GM12878 (cell line): ENCODE measurements at regions of chr4 and their contacts with region 1.

Region 1: GRCh38 chr4:26179316-26179760 is 141.5 kb upstream of the RBPJ start:
- DNase-seq: peak; percentile 52
- ATAC-seq: peak; percentile 81
- H3K4me3 ChIP-seq: no peak overlapping the region
- H3K27ac ChIP-seq: no peak overlapping the region
- H3K4me1 ChIP-seq: peaks cover 19% of the 10 kb centered on the region
- H3K27me3 ChIP-seq: no peaks in the 10 kb centered on the region
- CTCF ChIP-seq: peak in 2 of 3 experiments; percentile 22 to 23; a peak in 2 of 6 replicates
- EP300 ChIP-seq: peak; percentile 70 to 77; a peak in 2 of 4 replicates
- POLR2A ChIP-seq: no peak
- RAD21 ChIP-seq: peak; percentile 62

Region 2: DNA sequence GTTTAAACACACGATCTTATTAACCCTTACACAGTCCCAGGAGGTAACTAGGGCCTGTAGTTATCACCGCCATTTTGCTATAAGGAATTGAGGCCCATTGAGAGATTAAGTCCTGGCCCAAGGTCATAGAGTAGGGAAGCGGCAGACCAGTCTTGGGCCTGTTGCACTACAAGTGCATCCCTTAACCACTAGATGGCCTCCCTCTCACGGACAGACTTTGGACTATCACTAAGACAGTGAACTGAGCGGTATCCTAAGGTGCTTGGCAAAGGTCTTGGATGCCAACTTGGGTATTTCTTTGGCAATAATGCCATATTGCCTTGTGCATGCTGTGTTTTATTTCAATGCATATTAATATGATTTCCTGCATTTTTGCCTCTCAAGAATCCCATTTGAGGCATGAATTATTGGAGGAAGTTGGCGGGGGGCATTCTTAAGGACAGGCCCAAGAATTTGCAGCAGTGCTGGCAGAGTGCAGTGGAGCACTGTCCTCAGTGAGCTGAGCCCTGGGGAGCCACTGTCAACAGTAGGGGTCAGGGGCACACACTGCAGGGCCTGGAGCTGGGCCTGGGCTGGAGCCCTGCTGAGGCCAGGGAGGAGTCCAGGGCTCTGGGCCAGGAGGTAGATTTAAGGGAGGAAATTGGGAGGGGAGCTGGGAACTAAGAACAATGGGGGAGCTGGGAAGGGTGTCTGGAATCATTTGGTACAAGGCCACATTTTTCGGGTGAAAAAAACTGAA is 117.9 kb before region 1 on chr4:
- CTCF ChIA-PET with region 1: interaction called, 4 read pairs
- POLR2A ChIA-PET with region 1: interaction called, 5 read pairs
- RAD21 ChIA-PET with region 1: no interaction called
- SMC1A ChIA-PET with region 1: no interaction called
- in situ Hi-C with region 1: no loop called
- intact Hi-C with region 1: loop called (anchors 5 kb)
- DNase-seq: no peak
- ATAC-seq: peak; percentile 96
- H3K4me3 ChIP-seq: no peak overlapping the region
- H3K27ac ChIP-seq: no peak overlapping the region
- H3K4me1 ChIP-seq: peaks cover 9% of the 10 kb centered on the region; the same call in 1 of the 2 replicates
- H3K27me3 ChIP-seq: no peaks in the 10 kb centered on the region; a peak in 3 of 4 replicates
- CTCF ChIP-seq: peak; percentile 64 to 76 (median 76); a peak in 5 of 6 replicates
- EP300 ChIP-seq: no peak
- POLR2A ChIP-seq: no peak
- RAD21 ChIP-seq: peak; percentile 94

Region 3: DNA sequence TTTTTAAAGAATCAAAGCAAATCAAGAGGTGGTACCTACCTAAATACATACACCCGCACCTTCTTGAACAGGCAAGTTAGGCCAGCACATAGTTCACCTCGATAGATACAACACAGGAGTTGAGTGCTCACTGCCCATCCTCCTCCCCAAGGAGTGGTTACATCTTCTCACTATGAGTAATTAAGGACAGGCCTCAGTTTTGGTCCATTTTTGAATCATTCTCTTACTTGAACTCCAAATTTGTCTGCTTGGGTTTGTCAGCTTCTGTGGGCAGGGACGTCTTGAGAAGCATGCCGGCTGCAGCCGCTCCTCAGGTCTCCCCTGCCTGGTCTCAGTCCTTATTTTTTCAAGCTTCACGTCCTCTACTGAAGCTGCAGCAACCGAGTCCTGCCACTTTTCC is 49.2 kb before region 1 on chr4:
- CTCF ChIA-PET with region 1: interaction called, 4 read pairs
- POLR2A ChIA-PET with region 1: interaction called, 3 read pairs
- RAD21 ChIA-PET with region 1: interaction called, 3 read pairs
- SMC1A ChIA-PET with region 1: interaction called, 4 read pairs
- in situ Hi-C with region 1: no loop called
- intact Hi-C with region 1: loop called (anchors 1 kb)
- DNase-seq: peak; percentile 90
- ATAC-seq: peak; percentile 79
- H3K4me3 ChIP-seq: no peak overlapping the region
- H3K27ac ChIP-seq: peak overlapping the region; percentile 60
- H3K4me1 ChIP-seq: peaks cover 52% of the 10 kb centered on the region
- H3K27me3 ChIP-seq: no peaks in the 10 kb centered on the region
- CTCF ChIP-seq: no peak
- EP300 ChIP-seq: peak; percentile 78 to 79; a peak in 3 of 4 replicates
- POLR2A ChIP-seq: no peak
- RAD21 ChIP-seq: peak; percentile 30; the same call in 1 of the 2 replicates

Region 4: DNA sequence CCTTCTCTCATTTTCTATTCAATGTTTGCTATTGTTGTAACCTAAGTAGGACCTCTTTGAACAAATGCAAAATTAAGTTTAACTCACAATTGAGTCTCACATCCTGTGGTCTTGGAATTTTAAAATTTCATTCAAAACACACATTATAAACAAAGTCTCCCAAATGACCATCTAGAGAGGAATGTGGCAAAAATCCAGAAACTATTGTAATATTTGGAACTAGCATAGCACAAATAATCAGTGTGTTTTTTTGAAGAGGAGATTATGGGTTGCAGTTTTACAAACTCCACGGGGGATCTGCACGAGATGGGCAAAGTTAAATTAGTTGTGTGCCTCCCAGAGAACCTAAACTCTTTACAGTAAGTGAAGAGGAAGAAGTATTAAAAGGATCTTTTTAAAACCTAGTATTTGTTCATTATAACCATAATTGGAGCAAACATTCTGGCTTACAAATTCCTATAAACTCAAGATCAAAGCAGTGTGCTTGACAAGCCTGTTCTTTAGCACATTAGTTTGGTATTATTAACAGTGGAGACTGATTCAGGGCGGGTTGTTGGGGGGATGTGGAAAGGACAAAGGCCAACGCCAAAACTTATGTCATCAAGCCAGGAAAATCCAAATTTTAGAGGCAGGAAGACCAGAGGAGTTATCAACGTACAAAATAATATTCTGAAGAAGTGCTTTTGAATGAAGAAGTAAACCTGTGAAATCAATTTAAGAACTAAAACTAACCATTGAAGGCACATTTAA is 119.0 kb after region 1 on chr4:
- CTCF ChIA-PET with region 1: no interaction called
- POLR2A ChIA-PET with region 1: no interaction called
- RAD21 ChIA-PET with region 1: no interaction called
- SMC1A ChIA-PET with region 1: no interaction called
- in situ Hi-C with region 1: no loop called
- intact Hi-C with region 1: no loop called
- DNase-seq: no peak
- ATAC-seq: no peak
- H3K4me3 ChIP-seq: no peak overlapping the region
- H3K27ac ChIP-seq: no peak overlapping the region
- H3K4me1 ChIP-seq: peaks cover 7% of the 10 kb centered on the region; the same call in 1 of the 2 replicates
- H3K27me3 ChIP-seq: no peaks in the 10 kb centered on the region
- CTCF ChIP-seq: no peak
- EP300 ChIP-seq: no peak
- POLR2A ChIP-seq: no peak
- RAD21 ChIP-seq: no peak